CD14-positive monocyte (primary cell): ENCODE measurements at regions of chr1 and their contacts with region 1.

Region 1: GRCh38 chr1:75991497-75992114 is 59.4 kb upstream of the ASB17 start:
- DNase-seq: peak; percentile 53 to 68 (median 62)
- H3K4me3 ChIP-seq: no peak overlapping the region
- H3K4me3 Mint-ChIP-seq: no peak overlapping the region
- H3K27ac ChIP-seq: no peak overlapping the region
- H3K27ac Mint-ChIP-seq: no peak overlapping the region
- H3K4me1 ChIP-seq: no peaks in the 10 kb centered on the region
- H3K4me1 Mint-ChIP-seq: no peaks in the 10 kb centered on the region
- H3K27me3 ChIP-seq: no peaks in the 10 kb centered on the region
- H3K27me3 Mint-ChIP-seq: peaks cover 0 to 3% (median 0%) of the 10 kb centered on the region in 3 donors
- CTCF ChIP-seq: peak; percentile 92

Region 2: GRCh38 chr1:77134359-77134758 is 1142.8 kb after region 1 on chr1:
- intact Hi-C with region 1: loop called in 1 of 2 experiments (anchors 10 kb)
- DNase-seq: no peak
- H3K4me3 ChIP-seq: no peak overlapping the region
- H3K4me3 Mint-ChIP-seq: no peak overlapping the region
- H3K27ac ChIP-seq: no peak overlapping the region
- H3K27ac Mint-ChIP-seq: no peak overlapping the region
- H3K4me1 ChIP-seq: no peaks in the 10 kb centered on the region
- H3K4me1 Mint-ChIP-seq: no peaks in the 10 kb centered on the region
- H3K27me3 ChIP-seq: no peaks in the 10 kb centered on the region
- H3K27me3 Mint-ChIP-seq: no peaks in the 10 kb centered on the region
- CTCF ChIP-seq: no peak